Activated CD8-positive, alpha-beta T cell treated with anti-CD3 and anti-CD28 coated beads, Interleukin-2, amount 10 ng/mL, durations not matched to agents 7 days and 5 days (primary cell): ENCODE measurements at regions of chr19 and their contacts with region 1.

Region 1: GRCh38 chr19:14347999-14348889 is 33.0 kb upstream of the ADGRE5 start:
- DNase-seq: peak; percentile 74
- ATAC-seq: peak; percentile 73
- H3K4me3 Mint-ChIP-seq: peak overlapping the region; percentile 52
- H3K27ac Mint-ChIP-seq: peak overlapping the region; percentile 39
- H3K4me1 Mint-ChIP-seq: peaks cover 21% of the 10 kb centered on the region
- H3K27me3 Mint-ChIP-seq: no peaks in the 10 kb centered on the region

Region 2: GRCh38 chr19:14147797-14148605 is 200.2 kb before region 1 on chr19:
- CTCF ChIA-PET with region 1: interaction called, 24 read pairs
- POLR2A ChIA-PET with region 1: no interaction called
- DNase-seq: peak; percentile 67
- ATAC-seq: peak; percentile 57
- H3K4me3 Mint-ChIP-seq: peak overlapping the region; percentile 80
- H3K27ac Mint-ChIP-seq: peak overlapping the region; percentile 99
- H3K4me1 Mint-ChIP-seq: peaks cover 35% of the 10 kb centered on the region
- H3K27me3 Mint-ChIP-seq: no peaks in the 10 kb centered on the region

Region 3: GRCh38 chr19:14218620-14219330 is 129.5 kb before region 1 on chr19:
- CTCF ChIA-PET with region 1: interaction called, 21 read pairs
- POLR2A ChIA-PET with region 1: no interaction called
- DNase-seq: no peak
- ATAC-seq: no peak
- H3K4me3 Mint-ChIP-seq: no peak overlapping the region
- H3K27ac Mint-ChIP-seq: no peak overlapping the region
- H3K4me1 Mint-ChIP-seq: peaks cover 30% of the 10 kb centered on the region
- H3K27me3 Mint-ChIP-seq: no peaks in the 10 kb centered on the region

Region 4: GRCh38 chr19:14337510-14337909 is 10.7 kb before region 1 on chr19:
- CTCF ChIA-PET with region 1: interaction called, 22 read pairs
- POLR2A ChIA-PET with region 1: no interaction called
- DNase-seq: peak; percentile 45
- ATAC-seq: peak; percentile 58
- H3K4me3 Mint-ChIP-seq: no peak overlapping the region
- H3K27ac Mint-ChIP-seq: no peak overlapping the region
- H3K4me1 Mint-ChIP-seq: peaks cover 10% of the 10 kb centered on the region
- H3K27me3 Mint-ChIP-seq: no peaks in the 10 kb centered on the region

Region 5: GRCh38 chr19:14383661-14384555 is 35.7 kb after region 1 on chr19:
- CTCF ChIA-PET with region 1: interaction called, 20 read pairs
- POLR2A ChIA-PET with region 1: interaction called, 19 read pairs
- DNase-seq: peak; percentile 70
- ATAC-seq: peak; percentile 10
- H3K4me3 Mint-ChIP-seq: peak overlapping the region; percentile 86
- H3K27ac Mint-ChIP-seq: peak overlapping the region; percentile 89
- H3K4me1 Mint-ChIP-seq: peaks cover 45% of the 10 kb centered on the region
- H3K27me3 Mint-ChIP-seq: no peaks in the 10 kb centered on the region

Region 6: GRCh38 chr19:14419106-14419813 is 71.0 kb after region 1 on chr19 and contains the start of gene DDX39A:
- CTCF ChIA-PET with region 1: interaction called, 10 read pairs
- POLR2A ChIA-PET with region 1: no interaction called
- DNase-seq: peak; percentile 99
- ATAC-seq: peak; percentile 91
- H3K4me3 Mint-ChIP-seq: peak within 1 kb of the TSS; percentile 94
- H3K27ac Mint-ChIP-seq: peak within 1 kb of the TSS; percentile 99
- H3K4me1 Mint-ChIP-seq: peaks cover 41% of the 10 kb centered on the region
- H3K27me3 Mint-ChIP-seq: no peaks in the 10 kb centered on the region
- total RNA-seq, gene DDX39A: 309 to 313 TPM

Region 7: GRCh38 chr19:14450168-14450874 is 102.1 kb after region 1 on chr19:
- CTCF ChIA-PET with region 1: no interaction called
- POLR2A ChIA-PET with region 1: no interaction called
- DNase-seq: peak; percentile 76
- ATAC-seq: peak; percentile 93
- H3K4me3 Mint-ChIP-seq: no peak overlapping the region
- H3K27ac Mint-ChIP-seq: no peak overlapping the region
- H3K4me1 Mint-ChIP-seq: peaks cover 7% of the 10 kb centered on the region
- H3K27me3 Mint-ChIP-seq: no peaks in the 10 kb centered on the region